ENCODE measurements at regions of chr10 and their contacts with region 1.

Region 1: DNA sequence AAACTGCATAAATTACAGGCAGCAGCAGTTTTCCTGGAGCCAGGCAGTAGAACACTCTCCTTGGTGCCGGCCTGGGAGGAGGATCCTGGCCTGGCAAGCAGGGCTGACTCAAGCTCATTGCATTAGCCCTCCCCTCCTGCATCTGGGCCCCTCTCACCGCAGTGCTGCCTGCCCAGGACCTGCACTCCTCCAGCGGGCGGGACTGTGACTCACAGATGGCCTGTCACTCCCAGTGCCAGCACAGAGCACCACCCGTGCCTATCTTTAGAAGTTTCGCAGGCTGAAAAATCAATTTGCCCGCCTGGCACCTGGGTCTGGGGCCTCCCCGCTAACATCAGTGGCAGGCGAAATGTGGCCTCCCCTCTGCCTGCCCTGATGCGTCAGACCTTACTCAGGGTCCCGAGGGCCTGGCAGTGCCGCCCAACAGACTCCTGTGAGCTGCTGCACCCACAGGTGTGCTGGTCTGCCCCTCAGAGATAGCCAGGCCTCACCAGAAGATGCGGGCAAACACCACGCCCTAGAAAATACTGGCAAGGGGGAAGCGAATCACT is 123.8 kb downstream of the KCNMA1 start:
- DNase-seq: peak; percentile 92
- H3K4me3 ChIP-seq: peak overlapping the region in 1 of 3 experiments; percentile 7
- H3K27ac ChIP-seq: peak overlapping the region; percentile 56
- H3K4me1 ChIP-seq: peaks cover 48% of the 10 kb centered on the region
- H3K27me3 ChIP-seq: no peaks in the 10 kb centered on the region
- CTCF ChIP-seq: no peak

Region 2: GRCh38 chr10:77416311-77417135 is 97.3 kb before region 1 on chr10:
- CTCF ChIA-PET with region 1: no interaction called
- dilution Hi-C with region 1: no loop called
- in situ Hi-C with region 1: no loop called
- intact Hi-C with region 1: loop called (anchors 5 kb)
- DNase-seq: peak; percentile 69
- H3K4me3 ChIP-seq: no peak overlapping the region
- H3K27ac ChIP-seq: peak overlapping the region; percentile 71
- H3K4me1 ChIP-seq: peaks cover 34% of the 10 kb centered on the region
- H3K27me3 ChIP-seq: no peaks in the 10 kb centered on the region
- CTCF ChIP-seq: no peak

Region 3: GRCh38 chr10:77548151-77548550 is 34.3 kb after region 1 on chr10:
- CTCF ChIA-PET with region 1: no interaction called
- dilution Hi-C with region 1: no loop called
- in situ Hi-C with region 1: no loop called
- intact Hi-C with region 1: no loop called
- DNase-seq: no peak
- H3K4me3 ChIP-seq: no peak overlapping the region
- H3K27ac ChIP-seq: no peak overlapping the region
- H3K4me1 ChIP-seq: peaks cover 13% of the 10 kb centered on the region
- H3K27me3 ChIP-seq: no peaks in the 10 kb centered on the region
- CTCF ChIP-seq: no peak